Activated CD4-positive, alpha-beta T cell treated with anti-CD3 and anti-CD28 coated beads, Interleukin-2, amount 10 ng/mL, durations not matched to agents 24 days and 14 days (primary cell): ENCODE measurements at regions of chr10 and their contacts with region 1.

Region 1: DNA sequence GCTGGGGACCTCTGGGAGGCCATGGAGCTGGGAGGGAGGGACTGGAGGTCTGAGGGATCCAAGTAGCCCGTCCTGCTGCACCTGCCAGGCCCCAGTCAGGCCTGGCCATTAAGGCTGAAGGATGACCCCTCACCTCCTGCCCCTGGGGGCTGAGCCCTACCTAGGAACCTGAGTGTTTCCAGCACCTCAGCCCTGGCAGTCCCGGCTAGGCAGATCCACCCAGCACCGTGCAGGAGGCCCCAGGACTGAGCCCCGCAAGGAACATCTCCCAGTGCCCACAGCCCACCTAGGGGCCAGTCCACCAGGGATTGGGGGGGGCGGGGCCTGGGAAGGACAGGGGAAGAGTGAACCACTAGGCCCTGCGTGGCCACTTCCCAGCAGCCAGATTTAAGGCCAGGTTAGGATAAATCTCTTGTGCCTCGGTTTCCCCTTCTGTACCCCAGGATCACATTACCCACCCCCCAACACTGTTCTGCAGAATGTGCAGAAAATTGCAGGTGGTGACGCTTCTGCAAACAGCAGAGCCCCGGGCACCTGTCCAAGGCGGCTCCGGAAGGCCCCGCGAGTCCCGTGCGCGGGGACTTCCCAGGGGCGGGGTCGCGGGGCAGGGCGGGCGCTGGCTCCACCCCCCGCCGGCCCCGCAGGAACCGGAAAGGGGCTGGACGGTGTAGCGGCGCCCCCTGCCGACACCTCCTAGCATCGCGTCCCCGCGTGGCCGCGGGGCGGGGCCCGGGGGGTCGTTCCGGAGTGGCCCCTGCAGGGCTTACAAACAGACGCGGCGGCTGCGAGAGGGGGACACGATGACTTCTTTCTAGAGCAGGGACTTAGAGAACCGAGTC is 55.9 kb downstream of the PWWP2B start:
- DNase-seq: peak; percentile 97
- H3K4me3 Mint-ChIP-seq: peak overlapping the region; percentile 64
- H3K27ac Mint-ChIP-seq: peak overlapping the region; percentile 56
- H3K4me1 Mint-ChIP-seq: peaks cover 11% of the 10 kb centered on the region
- H3K27me3 Mint-ChIP-seq: no peaks in the 10 kb centered on the region

Region 2: DNA sequence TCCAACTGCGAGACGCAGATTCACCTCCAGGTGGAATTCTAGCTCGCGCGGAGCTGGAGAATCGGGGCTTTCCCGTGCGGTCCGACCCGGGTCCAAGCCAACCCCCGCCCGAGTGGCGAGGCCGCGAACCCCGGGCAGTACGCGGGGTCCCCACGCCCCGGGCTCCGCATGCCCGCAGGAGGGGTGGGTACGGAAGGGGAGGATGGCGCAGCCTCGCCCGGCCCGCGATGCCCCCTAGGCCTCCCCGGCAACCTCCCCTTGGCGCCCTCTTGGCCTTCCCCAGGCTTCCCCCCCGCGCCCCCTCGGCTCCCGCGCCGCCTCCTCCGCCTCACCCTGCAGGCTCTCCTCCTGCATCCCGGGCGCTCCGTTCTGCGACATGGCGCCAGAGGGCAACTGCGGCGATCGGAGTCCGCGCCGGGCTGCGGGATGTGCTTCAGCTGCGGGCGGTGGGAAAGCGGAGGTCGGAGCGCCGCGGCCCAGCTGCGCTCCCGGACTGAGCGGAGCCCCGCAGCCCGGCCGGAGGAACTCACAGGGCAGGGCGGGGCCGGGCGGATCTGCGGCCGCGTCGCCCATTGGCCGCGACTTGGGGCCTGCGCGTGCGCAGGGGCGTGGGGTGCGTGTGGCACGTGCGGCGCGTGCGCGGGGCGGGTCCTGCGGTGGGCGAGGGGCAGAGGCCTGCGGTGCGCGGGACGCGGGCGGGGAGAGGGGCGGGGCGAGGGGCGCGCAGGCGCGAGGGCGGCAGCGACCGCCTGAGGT is 471.2 kb before region 1 on chr10 and contains the start of gene BNIP3:
- intact Hi-C with region 1: loop called (anchors 5 kb)
- DNase-seq: peak; percentile 98
- H3K4me3 Mint-ChIP-seq: peak within 1 kb of the TSS; percentile 91
- H3K27ac Mint-ChIP-seq: peak within 1 kb of the TSS; percentile 87
- H3K4me1 Mint-ChIP-seq: peaks cover 36% of the 10 kb centered on the region
- H3K27me3 Mint-ChIP-seq: peaks cover 14% of the 10 kb centered on the region
- total RNA-seq, gene BNIP3: 94.4 and 95.1 TPM in 2 replicates

Region 3: DNA sequence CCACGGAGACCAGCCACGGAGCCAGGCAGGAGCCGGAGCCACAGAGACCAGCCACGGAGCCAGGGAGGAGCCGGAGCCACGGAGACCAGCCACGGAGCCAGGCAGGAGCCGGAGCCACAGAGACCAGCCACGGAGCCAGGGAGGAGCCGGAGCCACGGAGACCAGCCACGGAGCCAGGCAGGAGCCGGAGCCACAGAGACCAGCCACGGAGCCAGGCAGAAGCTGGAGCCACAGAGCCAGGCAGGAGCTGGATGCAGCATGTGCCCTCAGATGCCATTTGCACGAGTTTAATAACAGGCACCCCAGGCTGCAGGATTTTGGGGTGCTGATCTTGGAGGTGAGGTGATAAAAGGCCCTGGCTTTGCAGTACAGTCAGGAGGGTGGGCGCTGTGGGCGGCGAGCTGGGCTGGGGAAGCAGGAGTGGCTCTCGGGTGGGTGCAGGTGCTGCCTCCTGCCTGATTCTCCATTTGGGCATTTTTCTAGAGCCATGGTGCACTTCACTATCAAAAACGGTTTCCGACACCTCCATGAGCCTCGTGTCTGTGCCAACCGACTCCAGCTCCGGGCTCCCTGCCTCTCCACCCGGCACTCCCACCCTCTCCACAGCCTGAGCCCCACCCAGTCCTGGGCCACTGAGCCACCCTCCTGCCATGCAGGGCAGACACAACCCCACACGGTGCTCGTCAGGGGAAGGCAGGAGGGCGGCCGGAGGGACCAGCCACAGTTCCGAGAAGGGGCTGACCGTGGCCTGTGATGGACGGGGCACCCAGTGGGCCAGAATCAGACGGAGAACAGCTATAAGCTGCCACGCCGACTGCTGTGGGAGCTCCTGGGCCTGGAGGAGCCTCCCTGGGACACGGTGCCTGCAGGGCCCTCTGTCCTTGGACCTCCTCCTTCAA is 373.9 kb after region 1 on chr10:
- intact Hi-C with region 1: no loop called
- DNase-seq: no peak
- H3K4me3 Mint-ChIP-seq: no peak overlapping the region
- H3K27ac Mint-ChIP-seq: no peak overlapping the region
- H3K4me1 Mint-ChIP-seq: no peaks in the 10 kb centered on the region
- H3K27me3 Mint-ChIP-seq: no peaks in the 10 kb centered on the region